Aorta (tissue), 5 donors: ENCODE measurements at regions of chr2 and their contacts with region 1.

Region 1: GRCh38 chr2:43461453-43462073 is 134.3 kb downstream of the THADA start:
- DNase-seq: no peak
- ATAC-seq: no peak
- H3K4me3 ChIP-seq: no peak overlapping the region
- H3K27ac ChIP-seq: peak overlapping the region in 1 of 2 donors; percentile 89
- H3K4me1 ChIP-seq: peaks cover 13 to 16% of the 10 kb centered on the region in 2 donors
- H3K27me3 ChIP-seq: no peaks in the 10 kb centered on the region

Region 2: GRCh38 chr2:43300840-43301583 is 160.6 kb before region 1 on chr2:
- intact Hi-C with region 1: no loop called
- DNase-seq: no peak
- ATAC-seq: no peak
- H3K4me3 ChIP-seq: no peak overlapping the region
- H3K27ac ChIP-seq: peak overlapping the region; percentile 44 to 93
- H3K4me1 ChIP-seq: peaks cover 7 to 19% of the 10 kb centered on the region in 2 donors
- H3K27me3 ChIP-seq: no peaks in the 10 kb centered on the region

Region 3: GRCh38 chr2:43312755-43313641 is 148.6 kb before region 1 on chr2:
- intact Hi-C with region 1: loop called in 1 of 2 experiments (anchors 5 kb)
- DNase-seq: no peak
- ATAC-seq: peak; percentile 80
- H3K4me3 ChIP-seq: no peak overlapping the region
- H3K27ac ChIP-seq: peak overlapping the region; percentile 51 to 99
- H3K4me1 ChIP-seq: peaks cover 2 to 7% of the 10 kb centered on the region in 2 donors
- H3K27me3 ChIP-seq: no peaks in the 10 kb centered on the region

Region 4: DNA sequence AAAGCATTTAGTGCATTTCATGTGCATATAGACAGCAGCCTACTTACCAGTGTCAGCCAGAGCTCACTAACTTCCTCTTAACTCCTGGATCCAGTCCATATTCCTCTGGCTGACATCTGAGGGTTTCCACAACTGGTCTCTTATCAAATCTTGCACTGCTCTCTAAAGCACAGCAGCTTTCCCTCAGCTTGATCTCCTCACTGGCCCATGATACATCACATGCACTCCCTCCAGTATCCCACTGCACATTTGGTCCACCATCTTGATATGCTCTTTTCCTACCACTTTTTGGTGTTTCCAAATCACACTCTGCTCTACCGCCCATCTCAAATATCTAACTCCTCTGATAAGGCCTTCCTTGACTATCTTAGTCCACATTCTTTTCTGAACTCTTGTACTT is 130.1 kb before region 1 on chr2:
- intact Hi-C with region 1: no loop called
- DNase-seq: no peak
- ATAC-seq: peak; percentile 44
- H3K4me3 ChIP-seq: no peak overlapping the region
- H3K27ac ChIP-seq: peak overlapping the region; percentile 22 to 73
- H3K4me1 ChIP-seq: peaks cover 2 to 9% of the 10 kb centered on the region in 2 donors
- H3K27me3 ChIP-seq: no peaks in the 10 kb centered on the region

Region 5: GRCh38 chr2:43399515-43400264 is 61.9 kb before region 1 on chr2:
- intact Hi-C with region 1: loop called (anchors 5 to 10 kb)
- DNase-seq: no peak
- ATAC-seq: peak; percentile 21
- H3K4me3 ChIP-seq: no peak overlapping the region
- H3K27ac ChIP-seq: peak overlapping the region; percentile 42 to 85
- H3K4me1 ChIP-seq: peaks cover 0 to 14% of the 10 kb centered on the region in 2 donors
- H3K27me3 ChIP-seq: no peaks in the 10 kb centered on the region

Region 6: DNA sequence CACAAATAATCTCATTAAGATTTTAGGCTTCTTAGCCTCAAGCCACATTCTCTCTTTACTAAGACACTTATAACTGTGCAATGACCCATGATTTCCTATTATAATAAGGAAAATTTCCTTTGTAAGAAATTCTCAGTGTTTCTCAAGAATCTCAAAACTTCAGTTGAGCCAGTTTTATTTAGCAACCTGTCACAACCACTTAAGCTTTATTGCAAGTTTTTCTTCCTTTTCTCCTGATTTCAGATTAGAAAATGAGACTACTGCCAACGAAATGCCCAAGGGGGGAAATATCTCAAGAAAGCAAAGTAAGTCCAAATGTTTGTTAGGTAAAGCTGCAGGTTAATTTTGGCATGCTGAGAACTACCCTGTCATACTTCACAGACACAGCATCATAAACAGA is 44.3 kb before region 1 on chr2:
- intact Hi-C with region 1: loop called in 1 of 2 experiments (anchors 5 kb)
- DNase-seq: no peak
- ATAC-seq: no peak
- H3K4me3 ChIP-seq: no peak overlapping the region
- H3K27ac ChIP-seq: no peak overlapping the region
- H3K4me1 ChIP-seq: peaks cover 0 to 17% of the 10 kb centered on the region in 2 donors
- H3K27me3 ChIP-seq: no peaks in the 10 kb centered on the region